Heart left ventricle (tissue), 16 donors: ENCODE measurements at regions of chr2 and their contacts with region 1.

Region 1: DNA sequence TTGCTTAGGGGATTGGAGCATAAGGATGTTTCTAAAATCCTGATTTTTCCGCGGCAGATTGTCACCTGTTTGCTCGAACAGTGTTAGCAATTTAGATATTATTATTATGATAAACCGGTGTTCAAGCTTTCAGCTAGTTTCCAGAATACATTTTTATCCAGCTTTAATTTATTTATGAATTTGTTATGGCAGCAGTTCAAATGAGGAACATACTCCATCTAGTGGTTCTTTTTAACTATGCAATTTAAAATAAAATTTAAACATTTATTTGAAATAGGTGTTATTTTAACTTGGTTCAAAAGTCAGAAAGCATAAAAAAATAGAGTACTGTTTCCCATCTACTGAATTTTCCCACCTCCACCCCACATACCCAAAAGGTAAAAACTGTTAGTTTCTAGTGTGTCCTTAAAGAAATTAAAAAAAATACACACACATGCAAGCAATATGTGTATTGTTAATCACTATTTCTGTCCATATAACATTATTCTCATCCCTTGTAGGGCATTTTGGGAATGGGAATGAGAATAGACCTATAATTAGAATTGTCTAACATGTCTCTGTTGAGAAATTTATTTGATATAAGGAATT is 23.2 kb downstream of the ACOXL start:
- DNase-seq: no peak
- ATAC-seq: no peak
- H3K4me3 ChIP-seq: no peak overlapping the region
- H3K27ac ChIP-seq: no peak overlapping the region
- H3K4me1 ChIP-seq: no peaks in the 10 kb centered on the region
- H3K27me3 ChIP-seq: peaks cover 0 to 3% (median 0%) of the 10 kb centered on the region in 9 donors
- CTCF ChIP-seq: peak; percentile 43 to 74 (median 64)
- POLR2A ChIP-seq: no peak

Region 2: GRCh38 chr2:110677530-110678456 is 77.8 kb before region 1 on chr2 and contains the start of gene BUB1:
- intact Hi-C with region 1: loop called in 2 of 10 experiments (anchors 2 to 10 kb)
- DNase-seq: peak; percentile 97 to 98 (median 98)
- ATAC-seq: peak; percentile 99 to 100 (median 100)
- H3K4me3 ChIP-seq: peak within 1 kb of the TSS; percentile 61 to 89 (median 76)
- H3K27ac ChIP-seq: peak within 1 kb of the TSS; percentile 59 to 91 (median 86)
- H3K4me1 ChIP-seq: peaks cover 0 to 35% (median 8%) of the 10 kb centered on the region in 12 donors
- H3K27me3 ChIP-seq: no peaks in the 10 kb centered on the region
- CTCF ChIP-seq: no peak
- POLR2A ChIP-seq: peak in 1 of 2 donors; percentile 80
- total RNA-seq, gene BUB1: 0.30 to 8.3 (median 1.1) TPM in 8 of 9 donors, not detected in the other

Region 3: DNA sequence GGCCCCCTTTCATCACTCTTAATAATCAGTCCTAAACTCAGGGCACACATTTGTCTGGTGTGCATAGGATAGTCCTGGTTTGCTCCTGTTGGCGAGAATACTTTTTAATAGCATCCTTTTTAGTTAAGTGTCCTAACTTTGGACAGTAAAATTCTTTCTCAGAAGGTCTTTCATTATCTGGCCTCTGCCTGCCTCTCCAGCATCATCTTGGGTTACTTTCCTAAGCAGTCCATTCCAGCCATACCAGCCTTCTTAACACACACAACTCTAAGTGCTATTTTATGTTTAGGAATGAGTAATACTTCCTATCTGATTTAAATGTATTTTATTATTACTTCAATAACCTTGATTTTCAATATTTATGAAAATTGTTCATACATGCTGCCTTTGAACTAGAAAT is 127.8 kb after region 1 on chr2:
- intact Hi-C with region 1: no loop called
- DNase-seq: no peak
- ATAC-seq: no peak
- H3K4me3 ChIP-seq: no peak overlapping the region
- H3K27ac ChIP-seq: no peak overlapping the region
- H3K4me1 ChIP-seq: no peaks in the 10 kb centered on the region
- H3K27me3 ChIP-seq: no peaks in the 10 kb centered on the region
- CTCF ChIP-seq: no peak
- POLR2A ChIP-seq: no peak